ENCODE measurements at regions of chr16 and their contacts with region 1.

Region 1: GRCh38 chr16:81873843-81874752 is 95.0 kb downstream of the PLCG2 start:
- H3K4me3 Mint-ChIP-seq: no peak overlapping the region
- H3K27ac Mint-ChIP-seq: no peak overlapping the region
- H3K4me1 Mint-ChIP-seq: no peaks in the 10 kb centered on the region
- H3K27me3 Mint-ChIP-seq: no peaks in the 10 kb centered on the region

Region 2: GRCh38 chr16:81779536-81780320 is 94.4 kb before region 1 on chr16:
- intact Hi-C with region 1: loop called (anchors 5 kb)
- H3K4me3 Mint-ChIP-seq: peak overlapping the region; percentile 95
- H3K27ac Mint-ChIP-seq: peak overlapping the region; percentile 86
- H3K4me1 Mint-ChIP-seq: peaks cover 58% of the 10 kb centered on the region
- H3K27me3 Mint-ChIP-seq: peaks cover 5% of the 10 kb centered on the region

Region 3: GRCh38 chr16:81798311-81799137 is 75.6 kb before region 1 on chr16:
- intact Hi-C with region 1: loop called (anchors 5 kb)
- H3K4me3 Mint-ChIP-seq: peak overlapping the region; percentile 34
- H3K27ac Mint-ChIP-seq: peak overlapping the region; percentile 39
- H3K4me1 Mint-ChIP-seq: peaks cover 61% of the 10 kb centered on the region
- H3K27me3 Mint-ChIP-seq: no peaks in the 10 kb centered on the region

Region 4: GRCh38 chr16:81901483-81901882 is 27.4 kb after region 1 on chr16:
- intact Hi-C with region 1: no loop called
- H3K4me3 Mint-ChIP-seq: no peak overlapping the region
- H3K27ac Mint-ChIP-seq: no peak overlapping the region
- H3K4me1 Mint-ChIP-seq: no peaks in the 10 kb centered on the region
- H3K27me3 Mint-ChIP-seq: no peaks in the 10 kb centered on the region